Heart left ventricle (tissue), 16 donors: ENCODE measurements at regions of chr1 and their contacts with region 1.

Region 1: GRCh38 chr1:117473063-117473462 is 105.8 kb downstream of the MAN1A2 start:
- DNase-seq: no peak
- ATAC-seq: no peak
- H3K4me3 ChIP-seq: no peak overlapping the region
- H3K27ac ChIP-seq: no peak overlapping the region
- H3K4me1 ChIP-seq: no peaks in the 10 kb centered on the region
- H3K27me3 ChIP-seq: no peaks in the 10 kb centered on the region
- CTCF ChIP-seq: no peak
- POLR2A ChIP-seq: no peak

Region 2: GRCh38 chr1:117367047-117368018 is 105.7 kb before region 1 on chr1 and contains the start of gene MAN1A2:
- intact Hi-C with region 1: loop called in 1 of 10 experiments (anchors 10 kb)
- DNase-seq: peak; percentile 92 to 95 (median 93)
- ATAC-seq: peak; percentile 92 to 97 (median 96)
- H3K4me3 ChIP-seq: peak within 1 kb of the TSS; percentile 73 to 94 (median 88)
- H3K27ac ChIP-seq: peak within 1 kb of the TSS; percentile 90 to 99 (median 99)
- H3K4me1 ChIP-seq: peaks cover 4 to 60% (median 36%) of the 10 kb centered on the region in 12 donors
- H3K27me3 ChIP-seq: no peaks in the 10 kb centered on the region
- CTCF ChIP-seq: no peak
- POLR2A ChIP-seq: peak in 1 of 2 donors; percentile 81
- total RNA-seq, gene MAN1A2: 15.8 to 36.5 (median 23.9) TPM